ENCODE measurements at regions of chr6 and their contacts with region 1.

Region 1: DNA sequence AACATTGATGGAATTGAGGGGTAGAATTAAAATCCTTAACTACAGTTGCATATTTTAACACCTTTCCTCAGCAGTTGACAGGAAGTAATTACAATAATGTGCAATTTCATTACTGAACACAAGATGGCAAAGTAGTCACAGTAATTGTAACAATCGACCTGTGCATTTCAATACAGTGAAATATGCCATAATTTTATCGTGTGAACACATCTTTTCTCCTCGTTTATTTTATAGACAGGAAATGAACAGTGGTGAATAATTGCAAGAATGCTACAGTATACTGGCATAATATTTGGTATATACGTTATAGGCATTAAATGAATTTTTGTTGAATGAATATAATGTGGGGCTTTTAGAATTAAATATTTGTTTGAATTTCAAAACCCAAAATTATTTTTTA is 25.0 kb downstream of the CYB5R4 start:
- DNase-seq: no peak
- ATAC-seq: peak; percentile 81
- H3K4me3 ChIP-seq: no peak overlapping the region
- H3K27ac ChIP-seq: no peak overlapping the region
- H3K4me1 ChIP-seq: peaks cover 0 to 5% of the 10 kb centered on the region in 2 donors
- H3K27me3 ChIP-seq: no peaks in the 10 kb centered on the region

Region 2: GRCh38 chr6:83974409-83975050 is 90.0 kb after region 1 on chr6:
- intact Hi-C with region 1: loop called in 1 of 2 experiments (anchors 10 kb)
- DNase-seq: no peak
- ATAC-seq: no peak
- H3K4me3 ChIP-seq: no peak overlapping the region
- H3K27ac ChIP-seq: no peak overlapping the region
- H3K4me1 ChIP-seq: peaks cover 3 to 4% of the 10 kb centered on the region in 2 donors
- H3K27me3 ChIP-seq: no peaks in the 10 kb centered on the region

Region 3: GRCh38 chr6:84033523-84034451 is 149.3 kb after region 1 on chr6 and contains the start of gene MRAP2:
- intact Hi-C with region 1: loop called in 1 of 2 experiments (anchors 10 kb)
- DNase-seq: peak; percentile 60 to 85
- ATAC-seq: peak; percentile 77
- H3K4me3 ChIP-seq: peak within 1 kb of the TSS; percentile 91
- H3K27ac ChIP-seq: peak within 1 kb of the TSS; percentile 36 to 92
- H3K4me1 ChIP-seq: peaks cover 5 to 11% of the 10 kb centered on the region in 2 donors
- H3K27me3 ChIP-seq: no peaks in the 10 kb centered on the region
- total RNA-seq, gene MRAP2: 65.1 to 74.4 TPM

Region 4: GRCh38 chr6:84193114-84193708 is 308.7 kb after region 1 on chr6:
- intact Hi-C with region 1: loop called in 1 of 2 experiments (anchors 5 kb)
- DNase-seq: no peak
- ATAC-seq: peak; percentile 78
- H3K4me3 ChIP-seq: no peak overlapping the region
- H3K27ac ChIP-seq: peak overlapping the region in 1 of 2 donors; percentile 68
- H3K4me1 ChIP-seq: no peaks in the 10 kb centered on the region
- H3K27me3 ChIP-seq: no peaks in the 10 kb centered on the region

Region 5: DNA sequence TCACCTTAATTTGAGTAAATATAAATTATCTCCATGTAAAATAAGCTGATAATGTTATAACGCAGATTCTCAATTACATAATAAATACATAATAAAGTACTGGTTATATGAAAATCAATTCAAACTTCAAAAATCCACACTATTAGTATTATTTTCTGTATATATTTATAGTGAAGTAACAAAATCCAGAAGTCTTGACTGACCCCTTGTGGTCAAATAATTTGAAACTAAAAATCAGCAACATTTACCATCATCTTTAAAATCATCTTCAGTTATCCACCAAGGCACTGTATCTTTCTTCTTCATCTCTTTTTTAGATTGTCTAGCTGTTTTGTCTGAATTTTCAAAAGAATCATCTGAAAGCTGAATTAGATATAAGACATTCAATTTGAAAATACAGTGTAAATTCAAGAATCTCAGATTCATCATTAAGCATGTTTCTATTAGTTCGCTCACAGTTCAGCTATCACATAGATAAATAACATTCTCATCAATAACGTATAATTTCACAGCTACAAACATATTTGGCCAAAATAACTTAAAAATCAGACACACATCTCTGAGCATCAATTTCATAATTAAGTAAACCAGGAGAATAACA is 336.4 kb after region 1 on chr6:
- intact Hi-C with region 1: loop called (anchors 1 to 5 kb)
- DNase-seq: no peak
- ATAC-seq: no peak
- H3K4me3 ChIP-seq: no peak overlapping the region
- H3K27ac ChIP-seq: no peak overlapping the region
- H3K4me1 ChIP-seq: peaks cover 0 to under 1% of the 10 kb centered on the region in 2 donors
- H3K27me3 ChIP-seq: no peaks in the 10 kb centered on the region